Uterus (tissue), 4 donors: ENCODE measurements at regions of chr19 and their contacts with region 1.

Region 1: GRCh38 chr19:55117636-55118391 is at the start of gene PPP1R12C:
- DNase-seq: peak; percentile 98 to 99
- H3K4me3 ChIP-seq: peak within 1 kb of the TSS; percentile 75 to 80
- H3K27ac ChIP-seq: peak within 1 kb of the TSS; percentile 97 to 100
- H3K4me1 ChIP-seq: peaks cover 13 to 26% of the 10 kb centered on the region in 2 donors
- H3K27me3 ChIP-seq: no peaks in the 10 kb centered on the region
- CTCF ChIP-seq: peak in 2 of 4 experiments; percentile 22 to 39
- POLR2A ChIP-seq: peak in 1 of 2 donors; percentile 33
- total RNA-seq, gene PPP1R12C: 43.5 to 288 (median 116) TPM

Region 2: DNA sequence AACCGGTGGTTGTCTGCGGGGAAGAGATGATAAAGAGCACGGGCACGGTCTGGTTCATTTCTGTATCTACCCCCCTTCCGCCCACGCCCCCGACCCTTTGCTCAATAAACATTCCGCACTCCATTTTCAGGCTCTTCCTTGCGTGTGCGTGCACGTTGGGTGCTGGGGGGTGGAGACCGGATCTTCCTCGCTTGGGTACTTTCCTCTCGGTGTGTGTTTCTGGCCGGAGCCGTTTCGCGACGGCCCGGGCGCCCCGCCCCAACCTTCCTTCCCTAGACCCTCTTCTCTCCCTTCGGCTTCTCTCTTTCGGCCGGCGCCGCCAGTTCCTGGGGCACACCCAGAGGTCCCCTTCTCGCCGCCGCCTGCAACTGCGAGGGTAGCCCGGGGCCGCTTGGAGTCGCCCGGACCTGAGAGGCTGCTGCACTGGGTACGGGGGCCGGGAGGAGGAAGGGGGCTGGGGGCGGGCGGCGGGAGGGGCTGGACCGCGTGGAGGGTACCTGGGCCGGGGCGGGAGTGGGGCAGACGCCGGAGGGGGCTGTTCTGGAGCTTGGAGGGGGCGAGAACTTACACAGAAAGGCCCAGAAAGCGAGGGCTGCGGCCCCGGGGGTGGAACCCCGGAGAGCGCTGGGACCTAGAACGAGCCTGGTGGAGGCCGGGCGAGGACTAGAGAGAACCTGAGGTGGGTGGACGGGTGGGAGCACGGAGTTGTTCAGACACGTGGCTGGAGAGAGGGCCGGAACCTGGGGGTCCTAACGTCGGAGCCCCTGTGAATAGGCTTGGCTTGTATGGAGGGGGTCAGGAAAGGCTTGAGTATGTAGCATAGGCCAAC is 525.7 kb after region 1 on chr19 and contains the start of gene ZNF581:
- intact Hi-C with region 1: loop called (anchors 10 kb)
- DNase-seq: peak; percentile 70 to 76
- H3K4me3 ChIP-seq: peak within 1 kb of the TSS; percentile 72 to 94
- H3K27ac ChIP-seq: peak within 1 kb of the TSS; percentile 88 to 98
- H3K4me1 ChIP-seq: peaks cover 0 to 17% of the 10 kb centered on the region in 2 donors
- H3K27me3 ChIP-seq: no peaks in the 10 kb centered on the region
- CTCF ChIP-seq: peak in 2 of 4 experiments; percentile 20 to 28
- POLR2A ChIP-seq: peak in 1 of 2 donors; percentile 23
- total RNA-seq, gene ZNF581: 2.8 to 30.3 (median 12.8) TPM